ENCODE measurements at regions of chr2 and their contacts with region 1.

Region 1: GRCh38 chr2:55718165-55719008 is 24.7 kb upstream of the PNPT1 start:
- H3K4me3 Mint-ChIP-seq: no peak overlapping the region
- H3K27ac Mint-ChIP-seq: no peak overlapping the region
- H3K4me1 Mint-ChIP-seq: peaks cover 2% of the 10 kb centered on the region
- H3K27me3 Mint-ChIP-seq: no peaks in the 10 kb centered on the region

Region 2: DNA sequence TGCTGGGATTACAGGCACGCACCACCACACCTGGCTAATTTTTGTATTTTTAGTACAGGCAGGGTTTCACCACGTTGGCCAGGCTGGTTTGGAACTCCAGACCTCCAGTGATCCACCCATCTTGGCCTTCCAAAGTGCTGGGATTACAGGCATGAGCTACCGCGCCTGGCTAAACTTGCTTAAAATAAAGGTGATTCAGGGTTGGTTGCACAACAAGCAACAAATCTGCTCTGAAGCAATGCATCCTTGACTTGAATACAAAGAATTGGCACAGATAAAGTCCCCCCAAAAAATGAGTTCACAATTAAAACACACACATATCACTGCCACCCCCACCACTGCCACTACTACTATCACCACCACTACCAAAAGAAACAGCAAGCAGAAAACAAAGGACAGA is 333.6 kb before region 1 on chr2:
- intact Hi-C with region 1: no loop called
- H3K4me3 Mint-ChIP-seq: no peak overlapping the region
- H3K27ac Mint-ChIP-seq: no peak overlapping the region
- H3K4me1 Mint-ChIP-seq: peaks cover 7% of the 10 kb centered on the region
- H3K27me3 Mint-ChIP-seq: no peaks in the 10 kb centered on the region

Region 3: DNA sequence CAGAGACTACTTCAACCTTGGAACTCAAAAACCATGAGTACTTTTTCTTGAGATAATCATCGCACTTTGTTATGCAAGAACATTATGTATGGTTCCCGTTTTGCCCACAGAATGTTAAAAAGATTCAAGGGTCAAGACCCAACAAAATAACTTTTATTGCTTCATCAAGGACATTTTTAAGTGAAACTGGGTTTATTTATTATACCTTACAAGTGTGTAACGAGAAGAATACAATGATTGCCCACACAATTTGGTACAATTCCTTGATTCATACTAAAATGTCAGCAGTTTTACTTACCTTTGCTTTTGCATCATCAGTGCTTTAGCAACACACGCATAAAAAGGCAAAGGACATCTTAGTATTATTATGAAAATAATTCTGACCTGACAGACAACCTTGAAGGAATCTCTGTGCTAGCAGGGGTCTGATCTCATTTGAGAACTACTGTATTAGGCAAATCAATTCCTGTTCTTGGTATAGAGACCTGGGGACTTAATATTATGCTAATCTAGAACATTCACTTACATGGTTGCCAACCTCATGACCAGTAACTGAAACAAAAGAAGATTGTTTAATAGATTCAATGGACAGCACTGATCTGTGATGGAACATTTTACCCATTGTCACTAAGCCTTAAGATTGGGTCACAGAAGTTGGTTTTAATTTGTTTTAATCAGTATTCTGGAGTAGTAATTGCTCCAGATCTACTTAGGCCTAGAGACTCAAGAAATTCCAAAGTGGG is 315.0 kb before region 1 on chr2:
- intact Hi-C with region 1: no loop called
- H3K4me3 Mint-ChIP-seq: no peak overlapping the region
- H3K27ac Mint-ChIP-seq: no peak overlapping the region
- H3K4me1 Mint-ChIP-seq: peaks cover 13% of the 10 kb centered on the region
- H3K27me3 Mint-ChIP-seq: no peaks in the 10 kb centered on the region

Region 4: DNA sequence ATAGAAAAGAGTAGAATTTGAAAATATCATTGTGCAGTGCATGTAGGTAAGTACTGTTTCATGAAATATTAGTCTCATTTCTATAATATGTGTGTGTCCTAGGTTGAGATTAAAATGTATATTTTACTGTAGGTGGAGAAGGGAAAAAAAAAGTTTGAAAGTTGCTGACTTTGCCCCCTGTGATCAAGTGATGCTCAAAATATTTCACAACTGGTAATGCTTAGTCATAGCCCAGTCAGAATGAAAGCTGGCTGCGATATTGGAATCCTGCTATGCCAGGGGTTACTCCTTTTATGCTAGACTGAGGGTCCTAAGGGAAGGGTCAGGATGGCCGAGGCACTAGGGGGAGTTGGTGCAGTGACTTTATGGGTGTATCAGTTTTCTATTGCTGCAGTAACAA is 218.4 kb before region 1 on chr2:
- intact Hi-C with region 1: no loop called
- H3K4me3 Mint-ChIP-seq: no peak overlapping the region
- H3K27ac Mint-ChIP-seq: no peak overlapping the region
- H3K4me1 Mint-ChIP-seq: peaks cover 11% of the 10 kb centered on the region
- H3K27me3 Mint-ChIP-seq: no peaks in the 10 kb centered on the region

Region 5: GRCh38 chr2:55961318-55961911 is 243.0 kb after region 1 on chr2:
- intact Hi-C with region 1: loop called (anchors 1 kb)
- H3K4me3 Mint-ChIP-seq: no peak overlapping the region
- H3K27ac Mint-ChIP-seq: no peak overlapping the region
- H3K4me1 Mint-ChIP-seq: no peaks in the 10 kb centered on the region
- H3K27me3 Mint-ChIP-seq: peaks cover 6% of the 10 kb centered on the region

Region 6: DNA sequence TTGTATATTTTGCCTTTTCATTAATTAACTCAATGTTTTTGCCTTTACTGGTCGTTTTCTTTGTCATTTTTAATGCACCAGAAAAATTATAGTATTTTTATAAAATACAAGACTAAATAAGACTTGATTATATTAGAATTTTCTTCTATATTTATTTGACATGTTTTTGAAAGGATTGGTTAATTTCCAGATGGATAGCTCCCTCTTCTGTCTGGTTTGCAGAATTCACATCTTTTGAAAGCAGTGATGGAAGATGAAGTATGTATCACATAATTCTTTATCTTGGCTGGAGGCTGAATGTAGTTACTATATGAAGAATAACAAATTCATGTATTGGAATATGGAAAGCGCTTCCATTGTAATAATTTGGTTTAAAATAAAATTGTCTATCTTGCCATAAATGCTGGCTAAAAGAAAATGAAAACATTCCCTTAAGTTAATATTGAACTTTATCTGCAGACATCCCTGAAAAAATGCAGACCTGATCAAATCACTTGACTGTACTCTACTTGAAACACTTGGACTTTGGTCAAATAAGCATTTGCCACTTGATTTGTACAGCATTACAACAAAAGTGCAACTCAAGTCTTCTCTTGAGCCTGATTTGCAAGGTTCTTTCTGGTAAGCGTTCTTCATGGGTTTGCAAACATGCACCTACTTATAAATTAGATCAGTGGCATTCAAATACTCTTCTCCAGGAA is 291.5 kb after region 1 on chr2:
- intact Hi-C with region 1: loop called (anchors 1 kb)
- H3K4me3 Mint-ChIP-seq: no peak overlapping the region
- H3K27ac Mint-ChIP-seq: no peak overlapping the region
- H3K4me1 Mint-ChIP-seq: no peaks in the 10 kb centered on the region
- H3K27me3 Mint-ChIP-seq: no peaks in the 10 kb centered on the region

Region 7: GRCh38 chr2:56132138-56132537 is 413.8 kb after region 1 on chr2:
- intact Hi-C with region 1: loop called (anchors 2 kb)
- H3K4me3 Mint-ChIP-seq: no peak overlapping the region
- H3K27ac Mint-ChIP-seq: no peak overlapping the region
- H3K4me1 Mint-ChIP-seq: peaks cover 4% of the 10 kb centered on the region
- H3K27me3 Mint-ChIP-seq: no peaks in the 10 kb centered on the region

Region 8: DNA sequence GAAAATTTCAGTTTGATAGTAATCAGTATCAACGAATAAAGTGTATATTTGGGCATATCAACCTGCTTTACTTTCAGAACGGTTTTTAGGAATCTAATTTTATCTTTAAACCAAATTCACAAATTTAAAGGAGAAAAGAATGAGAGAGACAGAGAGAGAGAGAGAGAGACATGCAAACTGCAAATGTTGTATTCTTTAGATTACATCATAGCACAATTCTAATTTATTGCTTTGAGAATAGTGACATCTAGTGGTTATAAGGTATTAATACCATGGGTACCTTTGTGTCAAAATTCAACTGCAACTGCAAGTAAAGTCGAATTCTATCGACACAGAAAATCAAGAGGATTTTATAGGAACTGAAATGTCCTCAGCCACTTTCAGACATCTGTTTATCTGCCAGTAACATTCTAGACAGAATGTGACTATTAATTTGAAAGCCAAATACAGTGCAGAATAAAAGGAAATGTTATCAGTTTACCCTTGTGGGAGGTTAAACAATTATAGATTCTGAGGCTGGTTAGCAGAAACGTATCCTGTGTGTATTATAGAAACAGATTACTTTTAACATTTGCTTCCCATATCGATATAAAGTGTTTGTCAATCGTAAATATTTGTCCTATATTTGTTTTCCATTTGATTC is 1798.4 kb after region 1 on chr2:
- intact Hi-C with region 1: loop called (anchors 5 kb)
- H3K4me3 Mint-ChIP-seq: no peak overlapping the region
- H3K27ac Mint-ChIP-seq: no peak overlapping the region
- H3K4me1 Mint-ChIP-seq: peaks cover 7% of the 10 kb centered on the region
- H3K27me3 Mint-ChIP-seq: no peaks in the 10 kb centered on the region